ENCODE measurements at regions of chr15 and their contacts with region 1.

Region 1: GRCh38 chr15:50876989-50877360 is 31.5 kb upstream of the AP4E1 start:
- DNase-seq: peak; percentile 77
- ATAC-seq: no peak
- H3K4me3 Mint-ChIP-seq: peak overlapping the region; percentile 41
- H3K27ac Mint-ChIP-seq: peak overlapping the region; percentile 60
- H3K4me1 Mint-ChIP-seq: peaks cover 51% of the 10 kb centered on the region
- H3K27me3 Mint-ChIP-seq: peaks cover 5% of the 10 kb centered on the region
- CTCF ChIP-seq: peak; percentile 99

Region 2: DNA sequence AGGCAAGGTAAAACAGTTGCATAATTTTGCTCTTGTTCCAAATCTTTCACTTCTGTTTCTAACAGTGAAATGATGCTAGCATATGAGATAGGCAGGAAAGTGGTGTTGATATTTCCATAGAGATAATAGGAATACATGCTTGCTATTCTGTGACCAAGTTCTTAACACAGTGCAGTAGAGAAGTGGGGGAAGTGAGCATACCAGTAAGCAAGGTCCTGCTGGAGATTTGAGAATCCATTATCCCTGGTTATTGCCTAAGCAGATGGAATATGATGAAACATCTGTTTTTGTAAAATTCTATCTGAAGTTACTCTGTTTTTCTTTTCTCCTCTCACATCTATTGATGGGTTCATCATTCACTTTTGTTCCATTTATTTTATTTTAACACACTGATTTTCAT is 424.0 kb before region 1 on chr15:
- CTCF ChIA-PET with region 1: no interaction called
- POLR2A ChIA-PET with region 1: no interaction called
- intact Hi-C with region 1: no loop called
- DNase-seq: no peak
- ATAC-seq: no peak
- H3K4me3 Mint-ChIP-seq: no peak overlapping the region
- H3K27ac Mint-ChIP-seq: peak overlapping the region; percentile 16
- H3K4me1 Mint-ChIP-seq: peaks cover 2% of the 10 kb centered on the region
- H3K27me3 Mint-ChIP-seq: no peaks in the 10 kb centered on the region
- CTCF ChIP-seq: no peak

Region 3: GRCh38 chr15:50558012-50558411 is 319.0 kb before region 1 on chr15:
- CTCF ChIA-PET with region 1: no interaction called
- POLR2A ChIA-PET with region 1: no interaction called
- intact Hi-C with region 1: no loop called
- DNase-seq: no peak
- ATAC-seq: no peak
- H3K4me3 Mint-ChIP-seq: no peak overlapping the region
- H3K27ac Mint-ChIP-seq: no peak overlapping the region
- H3K4me1 Mint-ChIP-seq: peaks cover 31% of the 10 kb centered on the region
- H3K27me3 Mint-ChIP-seq: no peaks in the 10 kb centered on the region
- CTCF ChIP-seq: no peak

Region 4: GRCh38 chr15:50675536-50676144 is 201.3 kb before region 1 on chr15:
- CTCF ChIA-PET with region 1: interaction called, 22 read pairs
- POLR2A ChIA-PET with region 1: no interaction called
- intact Hi-C with region 1: loop called (anchors 5 kb)
- DNase-seq: no peak
- ATAC-seq: peak; percentile 27
- H3K4me3 Mint-ChIP-seq: no peak overlapping the region
- H3K27ac Mint-ChIP-seq: peak overlapping the region; percentile 46
- H3K4me1 Mint-ChIP-seq: peaks cover 26% of the 10 kb centered on the region
- H3K27me3 Mint-ChIP-seq: no peaks in the 10 kb centered on the region
- CTCF ChIP-seq: peak; percentile 98

Region 5: GRCh38 chr15:50681467-50681866 is 195.5 kb before region 1 on chr15:
- CTCF ChIA-PET with region 1: interaction called, 22 read pairs
- POLR2A ChIA-PET with region 1: interaction called, 3 read pairs
- intact Hi-C with region 1: loop called (anchors 5 kb)
- DNase-seq: no peak
- ATAC-seq: no peak
- H3K4me3 Mint-ChIP-seq: no peak overlapping the region
- H3K27ac Mint-ChIP-seq: peak overlapping the region; percentile 46
- H3K4me1 Mint-ChIP-seq: peaks cover 49% of the 10 kb centered on the region
- H3K27me3 Mint-ChIP-seq: no peaks in the 10 kb centered on the region
- CTCF ChIP-seq: no peak

Region 6: DNA sequence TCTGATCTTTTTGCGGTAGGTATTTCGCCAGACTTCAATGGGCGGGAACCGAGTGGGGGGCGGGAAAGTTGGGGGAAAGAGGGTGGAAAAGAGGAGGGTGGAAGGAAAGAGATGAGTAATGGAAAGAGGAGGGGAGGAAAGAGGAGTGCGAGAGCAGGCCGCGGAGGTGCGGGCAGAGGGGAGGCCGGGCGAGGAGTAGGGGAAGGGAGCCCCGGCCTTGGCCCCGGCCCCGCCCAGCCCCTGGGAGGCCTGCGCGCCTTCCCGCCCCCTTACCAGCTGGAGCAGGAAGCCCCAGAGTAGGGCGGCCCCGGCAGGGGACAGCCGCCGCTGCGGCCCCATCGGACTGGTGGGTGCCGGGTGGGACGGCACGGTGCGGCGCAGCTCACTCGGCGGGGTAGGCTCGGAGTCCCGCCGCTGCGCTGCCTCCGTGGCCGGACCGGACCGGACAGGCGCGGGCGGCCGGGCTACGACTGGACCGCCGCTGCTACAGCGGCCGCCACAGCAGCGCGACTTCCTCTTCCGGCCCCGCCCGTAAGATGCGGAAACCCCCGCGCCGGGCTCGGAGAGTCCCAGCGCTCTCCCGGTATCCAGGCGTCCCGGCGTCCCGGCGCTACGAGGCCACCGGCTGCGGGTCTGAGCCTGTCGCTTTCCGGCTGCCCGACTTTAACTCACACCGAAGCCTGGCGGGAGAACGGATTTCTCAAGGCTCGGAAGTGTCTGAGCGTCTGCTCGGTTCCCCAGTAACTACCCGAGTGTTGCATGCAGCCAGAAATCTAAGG is 111.6 kb before region 1 on chr15 and contains the start of gene SPPL2A:
- CTCF ChIA-PET with region 1: interaction called, 4 read pairs
- POLR2A ChIA-PET with region 1: interaction called, 4 read pairs
- intact Hi-C with region 1: loop called (anchors 10 kb)
- DNase-seq: peak; percentile 93
- ATAC-seq: peak; percentile 90
- H3K4me3 Mint-ChIP-seq: peak within 1 kb of the TSS; percentile 88
- H3K27ac Mint-ChIP-seq: peak within 1 kb of the TSS; percentile 99
- H3K4me1 Mint-ChIP-seq: peaks cover 54% of the 10 kb centered on the region
- H3K27me3 Mint-ChIP-seq: no peaks in the 10 kb centered on the region
- CTCF ChIP-seq: no peak
- total RNA-seq, gene SPPL2A: 47.7 to 48.8 TPM

Region 7: DNA sequence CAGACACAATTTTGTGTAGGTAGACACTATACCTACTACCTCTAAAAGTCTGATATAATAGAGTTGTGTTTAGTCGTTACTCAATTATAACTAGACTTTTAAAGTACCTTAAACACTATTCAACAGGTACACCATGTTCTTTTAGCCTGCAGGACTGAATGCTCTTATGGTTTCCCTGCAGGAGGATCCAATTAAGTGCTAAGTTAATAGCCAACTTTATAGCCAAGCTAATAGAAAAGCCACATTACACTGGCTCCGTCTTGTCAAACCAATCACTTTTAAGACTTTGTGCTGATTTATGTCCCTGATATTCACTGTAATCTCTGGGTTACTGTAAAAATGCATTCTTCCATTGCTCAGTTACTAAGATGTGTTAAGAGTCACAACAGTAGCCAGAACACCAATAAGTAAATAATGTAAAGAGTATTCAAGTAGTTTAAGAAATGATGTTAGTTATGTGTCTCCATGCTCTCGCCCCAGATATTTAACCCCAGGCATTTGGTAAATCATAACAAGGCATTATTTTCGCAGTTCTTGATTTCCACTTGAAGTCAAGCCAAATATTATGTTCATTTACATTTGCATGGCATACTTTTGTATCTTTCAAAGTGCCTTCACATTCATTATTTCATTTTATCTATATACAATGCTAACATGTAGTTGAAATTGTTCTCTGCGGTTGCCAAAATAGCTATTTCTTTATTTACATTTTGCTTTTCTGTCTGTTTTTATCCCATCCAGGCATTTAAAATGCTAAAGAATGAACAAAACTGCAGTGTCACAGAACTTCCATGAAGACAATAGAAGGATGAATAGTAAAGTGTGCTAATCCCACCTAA is 11.2 kb before region 1 on chr15:
- CTCF ChIA-PET with region 1: interaction called, 36 read pairs
- POLR2A ChIA-PET with region 1: interaction called, 4 read pairs
- intact Hi-C with region 1: no loop called
- DNase-seq: no peak
- ATAC-seq: no peak
- H3K4me3 Mint-ChIP-seq: no peak overlapping the region
- H3K27ac Mint-ChIP-seq: no peak overlapping the region
- H3K4me1 Mint-ChIP-seq: no peaks in the 10 kb centered on the region
- H3K27me3 Mint-ChIP-seq: peaks cover 3% of the 10 kb centered on the region
- CTCF ChIP-seq: no peak

Region 8: DNA sequence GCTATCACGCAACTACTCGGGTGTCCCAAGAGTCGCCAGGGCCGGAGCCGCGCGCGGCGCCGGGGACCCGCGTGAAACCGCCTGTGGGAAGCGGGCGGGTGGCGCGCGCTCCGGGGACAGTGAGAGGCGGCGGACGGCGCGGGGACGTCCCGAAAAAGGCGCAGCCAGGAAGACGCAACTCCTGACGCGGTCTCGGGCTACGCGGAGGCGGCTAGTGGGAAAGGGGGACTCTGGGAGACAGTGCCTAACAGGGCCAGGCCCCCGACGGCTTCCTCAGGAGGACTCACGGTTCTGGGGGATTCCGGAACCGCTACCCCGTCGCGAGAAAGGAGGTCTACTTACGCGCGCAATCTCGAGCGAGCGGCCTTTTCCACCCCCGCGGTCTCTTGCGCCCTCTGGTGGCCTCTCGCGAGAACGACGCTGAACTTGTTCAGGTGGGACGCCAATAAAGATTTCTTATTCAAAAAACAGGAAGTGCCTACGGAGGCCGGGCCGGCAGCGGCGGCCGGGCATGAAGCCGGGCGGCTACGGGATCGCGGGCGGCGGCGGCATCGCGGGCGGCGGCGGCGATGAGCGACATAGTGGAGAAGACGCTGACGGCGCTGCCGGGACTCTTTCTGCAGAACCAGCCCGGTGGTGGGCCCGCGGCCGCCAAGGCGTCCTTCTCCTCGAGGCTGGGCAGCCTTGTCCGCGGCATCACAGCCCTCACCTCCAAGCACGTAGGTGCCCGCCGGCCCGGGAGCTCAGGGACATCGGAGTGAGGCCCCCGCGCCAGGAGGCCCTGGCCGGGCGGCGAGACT is 31.4 kb after region 1 on chr15 and contains the start of gene AP4E1:
- CTCF ChIA-PET with region 1: interaction called, 5 read pairs
- POLR2A ChIA-PET with region 1: interaction called, 9 read pairs
- intact Hi-C with region 1: loop called (anchors 1 kb)
- DNase-seq: peak; percentile 94
- ATAC-seq: peak; percentile 67
- H3K4me3 Mint-ChIP-seq: peak within 1 kb of the TSS; percentile 81
- H3K27ac Mint-ChIP-seq: peak within 1 kb of the TSS; percentile 100
- H3K4me1 Mint-ChIP-seq: peaks cover 15% of the 10 kb centered on the region
- H3K27me3 Mint-ChIP-seq: no peaks in the 10 kb centered on the region
- CTCF ChIP-seq: peak; percentile 92
- total RNA-seq, gene AP4E1: 16.6 TPM

Region 9: DNA sequence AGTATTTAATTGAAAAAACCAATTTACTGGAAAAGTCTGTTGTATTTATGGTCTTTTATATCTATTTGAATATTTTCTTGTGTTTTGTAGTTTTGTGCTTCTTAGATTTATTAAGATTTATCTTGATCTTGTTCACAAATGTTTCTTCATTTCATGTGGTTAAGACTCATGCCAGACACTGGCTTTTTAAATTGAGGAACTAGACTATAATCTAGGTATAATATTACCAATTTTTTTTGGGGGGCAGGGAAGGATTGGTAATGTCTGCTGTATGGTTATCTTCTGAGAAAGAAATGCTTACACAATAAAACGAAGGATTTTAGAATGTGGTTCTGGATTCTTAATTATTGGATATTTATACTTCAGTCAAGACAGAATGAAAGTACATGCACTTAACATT is 56.4 kb after region 1 on chr15:
- CTCF ChIA-PET with region 1: no interaction called
- POLR2A ChIA-PET with region 1: no interaction called
- intact Hi-C with region 1: no loop called
- DNase-seq: no peak
- ATAC-seq: no peak
- H3K4me3 Mint-ChIP-seq: no peak overlapping the region
- H3K27ac Mint-ChIP-seq: no peak overlapping the region
- H3K4me1 Mint-ChIP-seq: no peaks in the 10 kb centered on the region
- H3K27me3 Mint-ChIP-seq: no peaks in the 10 kb centered on the region
- CTCF ChIP-seq: no peak

Region 10: GRCh38 chr15:51144021-51144532 is 267.1 kb after region 1 on chr15:
- CTCF ChIA-PET with region 1: no interaction called
- POLR2A ChIA-PET with region 1: no interaction called
- intact Hi-C with region 1: no loop called
- DNase-seq: no peak
- ATAC-seq: no peak
- H3K4me3 Mint-ChIP-seq: no peak overlapping the region
- H3K27ac Mint-ChIP-seq: no peak overlapping the region
- H3K4me1 Mint-ChIP-seq: no peaks in the 10 kb centered on the region
- H3K27me3 Mint-ChIP-seq: peaks cover 18% of the 10 kb centered on the region
- CTCF ChIP-seq: no peak